BJ (cell line): ENCODE measurements at regions of chr22 and their contacts with region 1.

Region 1: GRCh38 chr22:41517172-41518047 is 26.9 kb downstream of the POLR3H start:
- DNase-seq: no peak
- H3K4me3 ChIP-seq: no peak overlapping the region
- H3K27me3 ChIP-seq: no peaks in the 10 kb centered on the region
- CTCF ChIP-seq: peak; percentile 88

Region 2: GRCh38 chr22:41479671-41480396 is 37.6 kb before region 1 on chr22:
- CTCF ChIA-PET with region 1: interaction called, 17 read pairs
- POLR2A ChIA-PET with region 1: interaction called, 3 read pairs
- DNase-seq: no peak
- H3K4me3 ChIP-seq: no peak overlapping the region
- H3K27me3 ChIP-seq: no peaks in the 10 kb centered on the region
- CTCF ChIP-seq: 0 out of 2 replicates have a peak, but pooled peaks have one; percentile 4

Region 3: DNA sequence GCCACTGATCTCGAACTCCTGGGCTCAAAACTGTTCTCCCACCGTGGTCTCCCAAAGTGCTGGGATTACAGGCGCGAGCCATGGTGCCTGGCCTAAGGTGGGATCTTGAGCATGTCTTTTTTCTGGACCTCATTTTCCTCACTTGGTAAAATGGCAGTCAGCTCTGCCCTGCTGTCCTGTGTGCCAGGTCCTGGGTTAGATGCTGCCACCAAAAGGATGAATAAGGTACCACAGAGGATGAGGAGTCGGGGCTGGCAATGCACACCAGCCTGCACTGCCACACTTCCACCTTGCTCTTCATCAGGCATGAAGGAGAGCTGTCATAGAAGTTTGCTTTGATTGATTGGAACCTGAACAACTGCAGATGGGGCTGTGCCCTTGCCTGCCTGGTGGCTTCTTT is 16.2 kb before region 1 on chr22:
- CTCF ChIA-PET with region 1: interaction called, 18 read pairs
- POLR2A ChIA-PET with region 1: no interaction called
- DNase-seq: no peak
- H3K4me3 ChIP-seq: no peak overlapping the region
- H3K27me3 ChIP-seq: no peaks in the 10 kb centered on the region
- CTCF ChIP-seq: peak; percentile 25